ENCODE measurements at regions of chr2 and their contacts with region 1.

Region 1: DNA sequence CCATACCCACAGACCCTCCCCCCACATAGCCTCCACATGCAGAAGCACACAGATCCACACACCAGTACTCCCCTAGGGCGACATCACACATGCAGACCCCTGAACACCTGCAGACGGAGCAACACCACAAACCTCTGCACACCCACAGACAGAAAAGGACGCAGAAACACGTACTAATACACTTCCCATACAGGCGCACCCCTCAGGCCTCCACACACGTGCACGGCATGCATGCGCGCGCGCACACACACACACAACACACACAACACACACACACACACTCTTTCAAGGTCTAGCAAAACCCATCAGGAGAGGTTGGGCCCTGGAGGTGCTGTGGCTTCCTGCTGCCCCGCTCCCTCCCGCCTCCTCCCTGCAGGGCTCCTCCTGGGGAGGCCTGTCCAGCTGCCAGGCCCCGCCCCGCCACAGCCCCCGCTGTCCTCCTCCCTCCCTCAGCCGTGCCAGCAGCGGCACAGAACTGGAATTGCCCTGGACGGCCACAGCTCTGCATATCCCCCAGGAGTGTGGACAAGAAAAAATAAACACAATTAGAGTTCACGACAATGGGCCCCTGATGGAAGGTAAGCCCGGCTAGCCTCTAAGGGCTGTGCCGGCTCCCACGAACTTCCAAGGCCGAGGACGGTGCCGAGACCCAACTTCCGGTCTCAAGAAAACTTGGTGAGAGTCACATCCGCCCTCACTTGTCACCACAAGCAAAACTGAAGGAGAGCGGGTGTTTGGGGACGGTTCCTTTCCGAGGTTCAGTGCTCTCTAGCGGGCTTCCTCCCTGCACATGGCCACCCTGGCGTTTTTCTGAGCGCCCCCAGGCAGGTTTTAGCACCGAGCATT is 6.8 kb downstream of the ZFP36L2 start:
- DNase-seq: peak; percentile 94
- ATAC-seq: peak; percentile 57
- H3K4me3 Mint-ChIP-seq: peak overlapping the region; percentile 77
- H3K27ac Mint-ChIP-seq: peak overlapping the region; percentile 93
- H3K4me1 Mint-ChIP-seq: peaks cover 46% of the 10 kb centered on the region
- H3K27me3 Mint-ChIP-seq: no peaks in the 10 kb centered on the region

Region 2: GRCh38 chr2:43142921-43143438 is 76.6 kb before region 1 on chr2:
- CTCF ChIA-PET with region 1: interaction called, 666 read pairs
- DNase-seq: peak; percentile 75
- ATAC-seq: peak; percentile 70
- H3K4me3 Mint-ChIP-seq: peak overlapping the region; percentile 70
- H3K27ac Mint-ChIP-seq: peak overlapping the region; percentile 64
- H3K4me1 Mint-ChIP-seq: peaks cover 43% of the 10 kb centered on the region
- H3K27me3 Mint-ChIP-seq: no peaks in the 10 kb centered on the region

Region 3: DNA sequence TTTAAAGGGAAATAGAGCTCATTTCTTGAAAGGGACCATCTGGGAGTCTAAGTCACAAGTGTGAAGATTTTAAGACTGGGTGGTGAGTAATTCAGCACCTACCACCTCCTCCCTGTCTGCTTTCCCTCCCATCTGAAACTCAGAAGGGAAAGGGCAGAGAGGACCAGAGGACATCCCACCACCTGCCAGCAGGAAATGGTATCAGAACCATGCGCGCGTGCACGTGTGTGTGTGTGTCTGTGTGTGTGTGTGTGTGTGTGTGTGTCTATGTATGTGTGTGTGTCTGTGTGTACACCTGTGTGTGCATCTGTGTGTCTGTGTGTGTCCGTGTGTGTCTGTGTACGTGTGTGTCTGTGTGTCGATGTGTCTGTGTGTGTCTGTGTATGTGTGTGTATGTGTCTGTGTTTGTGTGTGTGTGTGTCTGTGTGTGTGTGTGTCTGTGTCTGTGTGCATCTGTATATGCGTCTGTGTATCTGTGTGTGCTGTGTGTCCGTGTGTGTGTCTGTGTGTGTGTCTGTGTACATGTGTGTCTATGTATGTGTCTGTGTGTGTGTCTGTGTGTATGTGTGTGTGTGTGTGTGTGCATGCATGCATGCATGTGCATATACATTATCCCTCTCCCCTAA is 70.0 kb before region 1 on chr2:
- CTCF ChIA-PET with region 1: interaction called, 15 read pairs
- DNase-seq: peak; percentile 79
- ATAC-seq: peak; percentile 90
- H3K4me3 Mint-ChIP-seq: peak overlapping the region; percentile 48
- H3K27ac Mint-ChIP-seq: peak overlapping the region; percentile 82
- H3K4me1 Mint-ChIP-seq: peaks cover 39% of the 10 kb centered on the region
- H3K27me3 Mint-ChIP-seq: no peaks in the 10 kb centered on the region

Region 4: DNA sequence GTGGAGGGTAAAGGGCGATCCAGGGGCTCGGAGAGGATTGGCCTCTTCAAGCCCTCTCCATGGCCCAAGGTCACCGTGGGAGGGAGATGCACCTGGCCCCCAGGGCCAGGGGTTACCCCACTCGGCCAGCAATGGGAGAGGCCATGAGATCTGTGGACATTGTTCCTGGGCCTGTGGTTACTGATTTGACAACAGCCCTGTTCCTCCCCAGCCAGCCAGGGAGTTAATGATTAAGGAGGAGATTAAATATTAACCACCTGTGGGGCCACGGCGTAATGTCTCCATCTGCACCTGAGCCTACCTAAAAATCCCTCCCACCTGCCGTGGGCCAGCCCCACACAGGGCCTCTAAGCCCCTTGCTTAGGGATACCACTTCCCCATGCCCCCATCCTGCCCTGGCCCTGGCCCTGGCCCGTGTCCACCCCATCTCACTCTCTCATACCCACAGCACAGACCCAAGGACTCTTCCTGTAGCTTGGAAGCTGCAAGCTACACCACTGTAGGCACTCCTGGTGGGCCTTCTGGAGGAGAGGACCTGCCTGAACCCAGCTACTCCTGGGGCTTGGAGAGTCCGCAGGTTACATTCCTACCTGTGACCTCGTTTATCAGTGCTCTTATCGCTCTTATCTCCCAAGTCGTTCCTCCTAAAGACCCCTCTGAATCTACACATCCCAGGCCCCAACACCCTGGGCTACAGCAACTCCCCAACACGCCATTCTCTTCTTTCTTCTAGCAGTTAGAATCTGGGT is 25.3 kb before region 1 on chr2:
- CTCF ChIA-PET with region 1: interaction called, 20 read pairs
- DNase-seq: no peak
- ATAC-seq: peak; percentile 12
- H3K4me3 Mint-ChIP-seq: peak overlapping the region; percentile 65
- H3K27ac Mint-ChIP-seq: peak overlapping the region; percentile 89
- H3K4me1 Mint-ChIP-seq: peaks cover 47% of the 10 kb centered on the region
- H3K27me3 Mint-ChIP-seq: no peaks in the 10 kb centered on the region

Measured in activated CD8-positive, alpha-beta memory T cell treated with anti-CD3 and anti-CD28 coated beads, Interleukin-2, amount 10 ng/mL, durations not matched to agents 7 days and 5 days (primary cell).